Mammary epithelial cell (primary cell): ENCODE measurements at regions of chr19 and their contacts with region 1.

Region 1: DNA sequence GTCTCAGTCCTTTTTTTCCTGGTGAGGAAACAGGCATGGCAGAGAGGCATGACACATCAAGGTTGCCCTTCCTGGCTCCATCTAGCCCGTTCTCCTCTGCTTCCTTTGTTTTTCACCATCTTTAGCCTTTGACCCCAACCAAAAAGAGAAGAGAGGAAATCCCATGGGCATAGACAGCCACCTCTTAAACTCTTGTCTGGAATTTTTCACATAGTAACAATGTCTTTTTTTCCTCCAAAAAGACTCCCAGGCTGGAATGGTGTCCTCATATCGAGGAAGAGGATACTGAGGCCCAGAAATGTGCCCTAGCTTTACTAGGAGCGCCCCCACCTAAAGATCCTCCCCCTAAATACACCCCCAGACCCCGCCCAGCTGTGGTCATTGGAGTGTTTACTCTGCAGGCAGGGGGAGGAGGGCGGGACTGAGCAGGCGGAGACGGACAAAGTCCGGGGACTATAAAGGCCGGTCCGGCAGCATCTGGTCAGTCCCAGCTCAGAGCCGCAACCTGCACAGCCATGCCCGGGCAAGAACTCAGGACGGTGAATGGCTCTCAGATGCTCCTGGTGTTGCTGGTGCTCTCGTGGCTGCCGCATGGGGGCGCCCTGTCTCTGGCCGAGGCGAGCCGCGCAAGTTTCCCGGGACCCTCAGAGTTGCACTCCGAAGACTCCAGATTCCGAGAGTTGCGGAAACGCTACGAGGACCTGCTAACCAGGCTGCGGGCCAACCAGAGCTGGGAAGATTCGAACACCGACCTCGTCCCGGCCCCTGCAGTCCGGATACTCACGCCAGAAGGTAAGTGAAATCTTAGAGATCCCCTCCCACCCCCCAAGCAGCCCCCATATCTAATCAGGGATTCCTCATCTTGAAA is at the start of gene GDF15:
- DNase-seq: peak; percentile 69
- H3K4me3 ChIP-seq: peak within 1 kb of the TSS; percentile 57 to 64 (median 60)
- H3K27ac ChIP-seq: no peak within 1 kb of the TSS
- H3K4me1 ChIP-seq: peaks cover 26% of the 10 kb centered on the region
- H3K27me3 ChIP-seq: no peaks in the 10 kb centered on the region
- CTCF ChIP-seq: peak; percentile 67 to 87
- total RNA-seq, gene GDF15: 78.7 to 93.2 TPM

Region 2: DNA sequence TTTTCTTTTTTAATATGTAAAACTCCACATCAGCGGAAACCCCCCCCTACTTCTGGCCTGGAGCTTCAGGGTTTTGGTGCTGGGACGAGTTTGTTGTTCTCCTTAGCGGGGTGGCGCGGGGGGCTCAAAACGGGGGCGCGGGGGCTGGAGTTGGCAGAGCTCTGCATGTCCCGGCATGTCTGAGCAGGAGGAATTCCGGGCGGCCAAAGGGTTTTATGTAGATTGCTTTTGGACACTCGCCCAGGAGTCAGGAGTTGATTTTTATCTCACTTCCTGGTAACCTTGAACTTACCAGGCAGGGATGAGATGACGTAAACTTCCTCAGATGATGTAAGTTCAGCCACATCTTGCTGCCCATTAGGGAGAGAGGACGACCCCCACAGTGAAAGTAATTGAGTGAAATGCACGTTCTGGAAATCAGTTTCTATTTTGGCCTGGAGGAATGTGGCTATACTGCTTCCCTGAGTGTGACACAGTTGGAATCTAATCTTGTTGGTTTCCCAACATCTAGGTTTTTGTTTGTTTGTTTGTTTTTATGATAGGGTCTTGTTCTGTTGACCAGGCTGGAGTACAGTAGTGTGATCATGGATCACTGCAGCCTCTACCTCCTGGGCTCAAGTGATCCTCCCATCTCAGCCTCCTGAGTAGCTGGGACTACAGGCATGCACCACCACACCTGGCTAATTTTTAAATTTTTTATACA is 20.9 kb before region 1 on chr19:
- CTCF ChIA-PET with region 1: no interaction called
- dilution Hi-C with region 1: no loop called
- in situ Hi-C with region 1: no loop called
- intact Hi-C with region 1: loop called (anchors 1 kb)
- DNase-seq: peak; percentile 96
- H3K4me3 ChIP-seq: no peak overlapping the region
- H3K27ac ChIP-seq: peak overlapping the region; percentile 80
- H3K4me1 ChIP-seq: peaks cover 19% of the 10 kb centered on the region
- H3K27me3 ChIP-seq: no peaks in the 10 kb centered on the region
- CTCF ChIP-seq: no peak

Region 3: GRCh38 chr19:18408053-18408476 is 22.2 kb after region 1 on chr19:
- CTCF ChIA-PET with region 1: no interaction called
- dilution Hi-C with region 1: no loop called
- in situ Hi-C with region 1: no loop called
- intact Hi-C with region 1: loop called (anchors 1 kb)
- DNase-seq: no peak
- H3K4me3 ChIP-seq: no peak overlapping the region
- H3K27ac ChIP-seq: no peak overlapping the region
- H3K4me1 ChIP-seq: peaks cover 3% of the 10 kb centered on the region
- H3K27me3 ChIP-seq: no peaks in the 10 kb centered on the region
- CTCF ChIP-seq: peak; percentile 20 to 38